ENCODE measurements at regions of chr13 and their contacts with region 1.

Region 1: DNA sequence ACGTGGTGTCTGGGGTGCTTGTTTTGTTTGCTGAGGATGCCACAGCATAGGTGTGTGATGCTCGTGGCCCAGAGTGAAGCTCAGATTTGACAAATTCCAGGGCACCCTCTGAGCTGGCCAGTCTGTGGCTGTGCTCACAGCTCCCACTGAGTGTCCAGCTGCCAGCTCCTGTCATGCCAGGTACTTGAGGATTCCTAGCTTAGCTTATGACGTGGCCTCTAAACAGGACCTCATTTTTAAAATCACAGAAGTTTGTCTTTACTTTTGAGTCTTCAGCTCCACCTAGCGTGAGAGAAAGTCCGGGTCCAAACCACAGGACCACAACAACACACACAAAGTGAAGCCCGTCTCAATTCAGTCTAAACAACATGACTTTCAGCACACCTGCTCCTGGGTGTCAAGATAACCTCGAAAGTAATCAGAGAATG is 117.3 kb downstream of the RAB20 start:
- DNase-seq: peak; percentile 11
- H3K4me3 Mint-ChIP-seq: no peak overlapping the region
- H3K27ac Mint-ChIP-seq: no peak overlapping the region
- H3K4me1 Mint-ChIP-seq: peaks cover 13% of the 10 kb centered on the region
- H3K27me3 Mint-ChIP-seq: no peaks in the 10 kb centered on the region
- CTCF ChIP-seq: no peak

Region 2: DNA sequence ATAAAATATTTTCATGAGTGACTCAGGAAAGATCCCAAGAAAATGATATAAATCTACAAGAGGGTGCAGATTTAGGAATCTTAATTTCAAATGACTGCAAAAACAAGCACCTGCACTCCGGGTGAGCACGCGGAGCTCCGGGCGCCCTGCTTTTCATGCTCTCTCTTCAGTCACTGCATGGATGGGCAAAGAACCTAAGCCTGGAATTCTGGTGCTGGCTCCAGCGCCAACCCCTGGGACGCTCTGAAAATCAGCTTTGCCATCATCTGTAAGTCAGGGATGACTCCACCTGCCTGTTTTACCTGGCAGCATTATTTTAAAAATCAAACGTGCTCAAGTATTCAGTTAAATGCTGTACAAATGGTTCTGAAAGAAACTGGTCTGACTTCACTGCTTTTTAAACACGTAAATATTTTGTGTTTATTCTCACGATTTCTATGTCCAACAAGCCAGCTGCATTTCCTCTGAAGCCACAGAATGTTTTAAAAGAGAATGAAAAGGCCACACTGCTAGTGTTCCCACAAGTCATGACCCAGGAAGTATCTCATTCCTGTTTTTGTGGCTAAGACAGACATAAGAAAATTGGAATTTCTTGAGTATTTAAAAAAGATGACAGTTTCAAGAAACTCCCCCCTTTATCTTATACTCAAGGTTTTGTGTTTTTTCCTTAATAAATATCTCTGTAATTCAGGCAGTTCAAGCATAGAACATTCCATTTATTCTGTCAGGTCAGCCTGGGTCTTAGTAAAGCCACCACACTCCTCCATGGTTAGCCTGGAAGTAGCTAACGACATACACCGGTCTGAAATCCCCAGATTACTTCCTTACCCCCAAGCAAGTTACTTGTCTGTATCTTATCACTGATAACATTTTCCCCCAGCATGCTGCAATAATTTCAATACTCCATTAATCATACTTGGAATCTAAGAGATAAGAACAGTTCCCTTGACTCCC is 218.4 kb before region 1 on chr13:
- CTCF ChIA-PET with region 1: interaction called, 4 read pairs
- intact Hi-C with region 1: loop called (anchors 1 kb)
- DNase-seq: no peak
- H3K4me3 Mint-ChIP-seq: no peak overlapping the region
- H3K27ac Mint-ChIP-seq: no peak overlapping the region
- H3K4me1 Mint-ChIP-seq: no peaks in the 10 kb centered on the region
- H3K27me3 Mint-ChIP-seq: no peaks in the 10 kb centered on the region
- CTCF ChIP-seq: no peak

Region 3: GRCh38 chr13:110340812-110341444 is 103.3 kb before region 1 on chr13:
- CTCF ChIA-PET with region 1: no interaction called
- intact Hi-C with region 1: no loop called
- DNase-seq: no peak
- H3K4me3 Mint-ChIP-seq: no peak overlapping the region
- H3K27ac Mint-ChIP-seq: no peak overlapping the region
- H3K4me1 Mint-ChIP-seq: no peaks in the 10 kb centered on the region
- H3K27me3 Mint-ChIP-seq: no peaks in the 10 kb centered on the region
- CTCF ChIP-seq: no peak

Region 4: GRCh38 chr13:110382229-110382628 is 62.0 kb before region 1 on chr13:
- CTCF ChIA-PET with region 1: no interaction called
- intact Hi-C with region 1: loop called (anchors 5 kb)
- DNase-seq: no peak
- H3K4me3 Mint-ChIP-seq: no peak overlapping the region
- H3K27ac Mint-ChIP-seq: peak overlapping the region; percentile 99
- H3K4me1 Mint-ChIP-seq: peaks cover 19% of the 10 kb centered on the region
- H3K27me3 Mint-ChIP-seq: no peaks in the 10 kb centered on the region
- CTCF ChIP-seq: no peak

Measured in Calu3 (cell line).